Heart left ventricle (tissue), 16 donors: ENCODE measurements at regions of chr9 and their contacts with region 1.

Region 1: DNA sequence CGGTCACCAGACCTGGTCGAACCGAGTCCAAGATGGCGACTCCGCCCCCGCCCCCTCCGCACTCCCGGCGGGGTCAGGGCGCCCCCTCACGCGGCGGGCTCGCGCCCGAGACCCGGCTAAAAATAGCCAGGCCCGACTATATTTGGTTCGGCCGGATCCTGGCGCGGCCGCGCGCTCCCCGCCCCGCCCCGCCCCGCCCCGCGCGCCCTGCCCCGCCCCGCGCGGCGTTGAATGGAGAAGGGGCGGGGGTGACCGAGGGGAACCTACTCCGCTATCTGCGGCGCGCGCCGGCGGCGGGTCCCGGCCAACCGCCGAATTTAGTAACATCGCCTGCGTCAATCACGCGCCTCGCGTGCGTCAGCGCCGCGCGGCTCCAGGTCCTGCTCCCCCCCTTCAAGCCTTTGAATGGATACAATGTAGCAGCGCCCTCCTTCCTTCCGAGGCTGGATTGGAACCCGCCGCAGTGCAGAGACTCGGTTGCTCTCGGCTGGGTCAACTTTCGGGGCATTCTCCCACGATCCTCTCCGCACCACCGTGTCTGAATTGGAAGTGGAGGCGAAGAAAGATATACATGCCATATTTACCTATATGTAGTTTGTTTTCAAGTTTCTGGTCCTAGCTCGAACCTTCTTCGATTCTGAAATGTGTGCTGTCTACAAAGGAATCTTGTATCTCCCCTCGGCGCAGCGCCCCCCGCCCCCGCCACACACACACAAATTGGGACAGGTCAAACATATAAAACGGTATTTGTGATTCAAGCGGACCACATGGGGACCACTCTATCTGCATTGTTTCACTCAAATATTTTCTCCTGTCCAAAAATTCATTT is 1.6 kb upstream of the NR4A3 start:
- DNase-seq: peak; percentile 94 to 97 (median 96)
- ATAC-seq: peak; percentile 68 to 79 (median 72)
- H3K4me3 ChIP-seq: peak overlapping the region; percentile 66 to 95 (median 88)
- H3K27ac ChIP-seq: peak overlapping the region; percentile 97 to 100 (median 98)
- H3K4me1 ChIP-seq: peaks cover 0 to 34% (median 22%) of the 10 kb centered on the region in 12 donors
- H3K27me3 ChIP-seq: peaks cover 0 to 14% (median 3%) of the 10 kb centered on the region in 9 donors
- CTCF ChIP-seq: peak in 6 of 12 donors; percentile 16 to 42 (median 31)
- POLR2A ChIP-seq: peak in 1 of 2 donors; percentile 34

Region 2: DNA sequence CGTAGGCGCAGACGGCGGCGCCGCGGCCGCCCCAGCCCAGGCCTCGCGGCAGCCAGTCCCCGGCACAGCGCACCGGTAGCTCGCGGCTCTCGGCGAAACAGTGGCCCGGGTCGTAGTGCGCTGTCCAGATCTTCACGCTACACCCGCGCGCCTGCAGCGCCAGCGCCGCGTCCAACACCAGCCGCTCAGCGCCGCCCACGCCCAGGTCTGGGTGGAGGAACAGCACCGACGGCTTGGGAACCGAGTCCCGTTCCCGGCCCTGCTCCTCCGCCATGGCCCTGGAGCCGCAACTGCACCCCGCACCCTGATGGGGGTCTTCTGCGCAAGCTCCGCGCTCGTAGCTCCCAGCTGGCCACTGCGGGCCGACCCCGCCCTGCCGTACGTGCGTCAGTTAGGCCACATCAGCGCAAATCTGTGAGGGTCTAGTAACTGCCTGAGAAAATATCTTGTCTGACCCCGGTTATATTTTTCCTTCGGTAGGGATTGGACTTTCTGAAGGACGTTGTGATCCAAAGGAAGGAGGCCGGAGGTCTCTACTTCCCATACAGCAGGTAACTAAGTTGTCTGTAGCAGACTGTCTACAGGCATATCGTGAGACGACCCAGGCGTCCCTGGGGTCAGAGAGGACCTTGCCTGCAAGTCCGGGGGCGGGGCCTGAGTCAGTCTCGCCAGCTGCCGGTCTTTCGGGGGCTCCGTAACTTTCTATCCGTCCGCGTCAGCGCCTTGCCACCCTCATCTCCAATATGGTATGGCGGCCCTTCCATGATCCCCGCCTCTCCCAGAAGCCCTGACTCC is 598.3 kb before region 1 on chr9 and contains the starts of genes ALG2 and SEC61B:
- intact Hi-C with region 1: loop called in 2 of 10 experiments (anchors 5 to 10 kb)
- DNase-seq: peak; percentile 95 to 97 (median 96)
- ATAC-seq: peak; percentile 98 to 99 (median 98)
- H3K4me3 ChIP-seq: peak within 1 kb of the TSS; percentile 60 to 99 (median 87)
- H3K27ac ChIP-seq: peak within 1 kb of the TSS; percentile 88 to 99 (median 94)
- H3K4me1 ChIP-seq: peaks cover 23 to 76% (median 70%) of the 10 kb centered on the region in 12 donors
- H3K27me3 ChIP-seq: no peaks in the 10 kb centered on the region
- CTCF ChIP-seq: no peak
- POLR2A ChIP-seq: peak; percentile 53 to 95
- total RNA-seq, gene ALG2: 13.0 to 21.6 (median 14.8) TPM
- total RNA-seq, gene SEC61B: 29.9 to 62.5 (median 39.5) TPM

Region 3: DNA sequence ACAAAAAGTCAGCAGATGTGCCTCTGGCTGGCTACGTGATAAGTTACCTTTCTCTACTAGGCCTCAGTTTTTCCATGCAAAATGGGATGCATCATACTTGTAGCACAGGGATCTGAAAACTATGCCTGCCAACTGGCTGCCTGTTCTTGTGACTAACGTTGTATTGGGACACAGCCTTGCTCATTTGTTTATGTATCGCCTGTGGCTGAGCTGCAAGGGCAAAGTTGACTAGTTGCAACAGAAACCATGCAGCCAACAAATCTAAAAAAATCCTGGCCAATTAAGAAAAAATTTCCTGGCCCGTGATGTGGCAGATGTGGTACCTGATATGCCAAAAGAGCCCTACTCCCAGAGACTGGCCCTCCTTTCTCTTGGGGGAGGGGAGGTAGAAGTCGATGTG is 466.7 kb before region 1 on chr9:
- intact Hi-C with region 1: loop called in 7 of 10 experiments (anchors 2 to 5 kb)
- DNase-seq: no peak
- ATAC-seq: no peak
- H3K4me3 ChIP-seq: no peak overlapping the region
- H3K27ac ChIP-seq: no peak overlapping the region
- H3K4me1 ChIP-seq: peaks cover 0 to 30% (median 5%) of the 10 kb centered on the region in 12 donors
- H3K27me3 ChIP-seq: no peaks in the 10 kb centered on the region
- CTCF ChIP-seq: no peak
- POLR2A ChIP-seq: no peak

Region 4: DNA sequence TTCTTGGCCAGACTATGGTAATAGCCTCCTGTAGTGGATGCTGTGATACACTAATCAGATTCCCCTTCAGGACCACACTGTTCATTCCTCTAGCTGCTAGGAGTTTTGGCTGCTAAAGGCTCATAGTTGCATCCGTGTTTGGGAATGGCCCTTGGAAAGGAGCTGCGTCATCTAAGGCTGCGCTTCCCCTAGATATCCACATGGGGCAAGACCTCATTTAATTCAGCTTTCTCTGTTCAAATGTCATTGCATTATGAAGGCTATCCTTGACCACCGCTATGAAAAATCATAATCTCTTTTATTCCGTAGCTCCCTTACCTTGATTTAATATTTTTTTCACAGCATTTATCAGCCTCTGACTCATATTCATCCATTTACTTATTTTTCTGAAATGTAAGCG is 256.7 kb before region 1 on chr9:
- intact Hi-C with region 1: loop called in 1 of 10 experiments (anchors 2 kb)
- DNase-seq: no peak
- ATAC-seq: no peak
- H3K4me3 ChIP-seq: no peak overlapping the region
- H3K27ac ChIP-seq: no peak overlapping the region
- H3K4me1 ChIP-seq: peaks cover 0 to 30% (median 5%) of the 10 kb centered on the region in 12 donors
- H3K27me3 ChIP-seq: no peaks in the 10 kb centered on the region
- CTCF ChIP-seq: no peak
- POLR2A ChIP-seq: no peak

Region 5: GRCh38 chr9:100084734-100085133 is 264.7 kb after region 1 on chr9:
- intact Hi-C with region 1: no loop called
- DNase-seq: no peak
- ATAC-seq: no peak
- H3K4me3 ChIP-seq: no peak overlapping the region
- H3K27ac ChIP-seq: no peak overlapping the region
- H3K4me1 ChIP-seq: peaks cover 0 to 60% (median 31%) of the 10 kb centered on the region in 12 donors
- H3K27me3 ChIP-seq: no peaks in the 10 kb centered on the region
- CTCF ChIP-seq: no peak
- POLR2A ChIP-seq: no peak

Region 6: GRCh38 chr9:100108559-100108958 is 288.5 kb after region 1 on chr9:
- intact Hi-C with region 1: loop called in 1 of 10 experiments (anchors 5 kb)
- DNase-seq: no peak
- ATAC-seq: no peak
- H3K4me3 ChIP-seq: no peak overlapping the region
- H3K27ac ChIP-seq: no peak overlapping the region
- H3K4me1 ChIP-seq: peaks cover 0 to 22% (median 11%) of the 10 kb centered on the region in 12 donors
- H3K27me3 ChIP-seq: no peaks in the 10 kb centered on the region
- CTCF ChIP-seq: no peak
- POLR2A ChIP-seq: no peak

Region 7: DNA sequence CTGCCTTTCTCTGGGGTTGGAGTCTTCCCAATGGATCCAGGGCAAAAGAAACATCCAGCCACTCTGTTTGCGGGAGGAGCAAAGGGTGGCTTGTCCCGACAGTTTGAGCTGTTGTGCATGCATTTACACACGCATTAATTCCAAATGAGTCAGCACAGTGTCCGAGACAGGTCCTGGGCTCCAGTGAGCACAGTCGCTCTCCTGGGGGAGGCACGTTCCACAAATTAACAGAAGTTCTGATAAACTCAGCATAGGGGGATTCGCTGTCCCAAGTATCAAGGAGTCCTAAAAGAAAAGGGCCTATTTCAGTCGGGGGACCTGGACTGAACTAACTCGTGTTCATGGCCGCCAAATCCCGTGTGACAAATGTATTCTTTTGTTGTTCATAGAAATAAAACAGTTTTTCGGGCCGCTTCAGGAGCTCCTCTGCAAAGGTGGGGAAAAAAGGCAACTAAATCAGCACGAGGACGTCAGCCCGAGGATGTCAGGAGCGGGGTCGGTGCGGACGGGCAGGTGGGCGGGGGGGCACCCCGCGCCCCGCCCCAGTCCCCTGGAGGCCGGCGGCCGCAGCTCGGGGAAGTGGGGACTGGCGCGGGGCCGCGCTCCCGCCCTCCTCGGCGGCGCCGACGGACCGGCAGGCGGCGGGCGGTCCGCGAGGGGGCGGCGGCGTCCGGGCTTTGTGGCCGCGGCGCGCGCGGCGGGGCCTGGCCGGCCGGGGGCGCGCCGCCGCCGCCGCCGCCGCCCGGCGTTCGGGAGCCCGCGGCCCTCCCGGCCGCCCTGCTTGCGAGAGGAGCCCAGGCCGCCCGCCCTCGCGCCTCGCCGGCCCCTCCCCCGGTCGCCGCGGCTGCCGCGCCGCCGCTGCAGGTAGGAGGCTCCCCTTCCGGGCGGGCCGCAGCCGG is 606.7 kb after region 1 on chr9 and contains the start of gene MSANTD3:
- intact Hi-C with region 1: loop called in 1 of 10 experiments (anchors 10 kb)
- DNase-seq: peak; percentile 67 to 85 (median 71)
- ATAC-seq: peak; percentile 65 to 83 (median 81)
- H3K4me3 ChIP-seq: peak within 1 kb of the TSS; percentile 64 to 98 (median 88)
- H3K27ac ChIP-seq: peak within 1 kb of the TSS; percentile 78 to 95 (median 86)
- H3K4me1 ChIP-seq: peaks cover 0 to 33% (median 20%) of the 10 kb centered on the region in 12 donors
- H3K27me3 ChIP-seq: no peaks in the 10 kb centered on the region
- CTCF ChIP-seq: peak in 2 of 12 donors; percentile 29 to 32
- POLR2A ChIP-seq: peak in 1 of 2 donors; percentile 53
- total RNA-seq, gene MSANTD3: 17.8 to 60.5 (median 24.1) TPM